Calu3 (cell line): ENCODE measurements at regions of chr18 and their contacts with region 1.

Region 1: GRCh38 chr18:7566567-7567473 is at the start of gene PTPRM:
- DNase-seq: peak; percentile 86
- H3K4me3 Mint-ChIP-seq: peak within 1 kb of the TSS; percentile 78
- H3K27ac Mint-ChIP-seq: no peak within 1 kb of the TSS
- H3K4me1 Mint-ChIP-seq: peaks cover 36% of the 10 kb centered on the region
- H3K27me3 Mint-ChIP-seq: no peaks in the 10 kb centered on the region
- CTCF ChIP-seq: no peak
- total RNA-seq, gene PTPRM: 42.3 and 48.5 TPM in 2 replicates

Region 2: DNA sequence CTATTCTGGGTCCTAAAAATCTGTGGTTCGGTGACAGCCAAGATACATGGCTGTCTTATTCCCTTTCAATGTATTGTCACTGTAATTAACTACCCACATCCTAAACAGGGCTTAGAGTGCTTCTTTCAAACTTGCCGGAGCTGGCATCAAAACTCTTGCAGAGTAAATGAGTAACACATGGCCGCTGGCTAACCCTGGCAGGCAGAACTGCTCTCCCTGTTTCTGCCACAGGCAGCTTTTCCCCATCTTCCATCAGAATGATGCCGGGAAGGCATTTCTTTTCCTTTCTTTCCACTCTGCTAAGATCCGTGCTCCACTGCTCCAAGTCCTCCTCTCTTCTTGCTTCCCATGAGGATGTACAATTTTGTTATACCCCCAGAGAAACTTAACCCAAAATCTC is 54.5 kb before region 1 on chr18:
- CTCF ChIA-PET with region 1: no interaction called
- intact Hi-C with region 1: loop called (anchors 5 kb)
- DNase-seq: peak; percentile 65
- H3K4me3 Mint-ChIP-seq: peak overlapping the region; percentile 36
- H3K27ac Mint-ChIP-seq: peak overlapping the region; percentile 17
- H3K4me1 Mint-ChIP-seq: peaks cover 19% of the 10 kb centered on the region
- H3K27me3 Mint-ChIP-seq: no peaks in the 10 kb centered on the region
- CTCF ChIP-seq: no peak

Region 3: DNA sequence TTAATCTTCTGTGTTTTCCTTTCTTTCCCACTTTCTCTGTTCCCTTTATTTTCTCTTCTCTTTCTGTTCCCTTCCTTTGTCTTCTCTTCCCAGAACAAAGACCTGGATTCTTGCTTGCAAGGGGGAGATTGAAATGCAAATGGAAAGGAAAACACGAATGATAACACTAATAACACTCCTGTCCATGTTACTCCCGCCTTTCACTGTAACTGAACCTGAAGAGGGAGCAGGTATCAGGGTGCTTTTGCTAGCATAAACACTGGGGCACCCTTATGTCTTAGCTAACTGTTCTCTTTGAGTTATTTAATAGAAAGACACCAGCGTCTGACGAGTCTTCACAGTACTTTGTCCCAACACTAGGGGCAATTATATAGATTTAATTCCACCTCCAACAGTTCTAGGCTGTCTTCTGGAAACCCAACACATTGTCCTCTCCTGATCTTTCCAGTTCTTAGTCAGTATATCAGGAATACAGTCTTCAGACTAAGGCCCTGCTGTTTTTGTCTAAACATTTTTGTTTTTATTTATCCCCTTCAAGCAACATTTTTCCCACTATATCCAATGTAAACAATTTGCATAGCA is 99.5 kb after region 1 on chr18:
- CTCF ChIA-PET with region 1: no interaction called
- intact Hi-C with region 1: no loop called
- DNase-seq: no peak
- H3K4me3 Mint-ChIP-seq: no peak overlapping the region
- H3K27ac Mint-ChIP-seq: no peak overlapping the region
- H3K4me1 Mint-ChIP-seq: no peaks in the 10 kb centered on the region
- H3K27me3 Mint-ChIP-seq: no peaks in the 10 kb centered on the region
- CTCF ChIP-seq: no peak

Region 4: DNA sequence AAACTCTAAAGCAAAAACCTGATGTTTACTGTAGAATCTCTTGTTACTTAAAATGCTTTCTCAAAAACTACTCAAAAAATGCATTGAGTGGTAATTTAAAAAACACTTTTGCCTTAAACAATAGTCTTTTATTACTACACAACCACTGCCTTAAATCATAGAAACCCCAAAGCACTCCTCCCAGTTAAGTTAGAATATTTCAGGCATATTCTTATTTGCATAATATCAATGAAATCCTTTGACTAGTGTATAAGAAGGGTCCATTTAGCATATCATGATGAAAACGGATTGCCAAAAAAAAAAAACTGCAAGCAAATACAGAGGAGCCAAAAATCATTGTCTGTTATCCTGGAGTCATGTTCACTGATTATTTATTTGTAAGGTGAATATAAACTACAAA is 119.5 kb after region 1 on chr18:
- CTCF ChIA-PET with region 1: no interaction called
- intact Hi-C with region 1: no loop called
- DNase-seq: no peak
- H3K4me3 Mint-ChIP-seq: no peak overlapping the region
- H3K27ac Mint-ChIP-seq: no peak overlapping the region
- H3K4me1 Mint-ChIP-seq: no peaks in the 10 kb centered on the region
- H3K27me3 Mint-ChIP-seq: no peaks in the 10 kb centered on the region
- CTCF ChIP-seq: no peak

Region 5: GRCh38 chr18:7755753-7756475 is 189.1 kb after region 1 on chr18:
- CTCF ChIA-PET with region 1: no interaction called
- intact Hi-C with region 1: loop called (anchors 2 kb)
- DNase-seq: no peak
- H3K4me3 Mint-ChIP-seq: no peak overlapping the region
- H3K27ac Mint-ChIP-seq: no peak overlapping the region
- H3K4me1 Mint-ChIP-seq: peaks cover 31% of the 10 kb centered on the region
- H3K27me3 Mint-ChIP-seq: no peaks in the 10 kb centered on the region
- CTCF ChIP-seq: no peak

Region 6: GRCh38 chr18:8480506-8481328 is 913.9 kb after region 1 on chr18:
- CTCF ChIA-PET with region 1: no interaction called
- intact Hi-C with region 1: loop called (anchors 10 kb)
- DNase-seq: peak; percentile 50
- H3K4me3 Mint-ChIP-seq: no peak overlapping the region
- H3K27ac Mint-ChIP-seq: no peak overlapping the region
- H3K4me1 Mint-ChIP-seq: no peaks in the 10 kb centered on the region
- H3K27me3 Mint-ChIP-seq: peaks cover 87% of the 10 kb centered on the region
- CTCF ChIP-seq: peak; percentile 32